A549 (cell line): ENCODE measurements at regions of chr17 and their contacts with region 1.

Region 1: DNA sequence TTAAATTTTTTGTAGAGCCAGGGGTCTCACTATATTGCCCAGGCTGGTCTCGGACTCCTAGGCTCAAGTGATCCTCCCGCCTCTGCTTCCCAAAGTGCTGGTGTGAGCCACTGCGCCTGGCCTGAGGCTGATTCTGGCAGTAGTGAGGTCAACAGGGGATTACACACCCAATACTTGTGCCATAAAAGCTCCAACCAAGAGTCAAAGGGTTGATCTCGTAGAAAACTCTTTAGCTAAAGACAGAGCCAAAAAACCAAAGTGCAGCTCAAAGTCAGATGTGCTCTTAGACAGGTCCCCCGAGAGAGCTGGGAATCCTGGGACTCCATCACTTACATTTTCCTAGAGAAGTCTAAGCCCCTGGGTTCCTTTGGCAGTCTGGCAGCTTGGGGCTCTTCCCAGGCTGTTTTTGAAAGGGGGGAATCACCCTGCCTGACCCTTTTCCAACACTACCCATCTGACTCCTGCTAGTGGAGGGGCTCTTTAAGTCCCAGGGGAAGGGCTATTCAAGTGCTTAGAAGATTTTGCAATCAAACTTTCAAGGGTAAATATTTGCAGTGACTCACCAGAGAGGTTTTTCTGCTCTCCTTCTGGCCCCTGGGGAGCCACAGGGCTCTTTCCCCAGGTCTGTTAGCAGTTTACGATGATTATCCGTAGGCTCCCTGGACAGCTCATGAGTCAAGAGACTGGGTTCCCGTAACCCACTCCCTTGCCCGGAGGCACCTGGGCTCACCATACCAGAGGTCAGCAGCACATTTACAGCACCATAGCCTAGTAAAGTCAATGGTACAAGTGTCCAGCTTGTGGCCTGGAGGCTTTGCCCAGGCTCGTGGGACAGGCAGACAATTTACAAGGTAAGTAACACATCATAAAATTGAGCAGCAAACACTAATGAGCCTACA is 408.7 kb downstream of the SLC39A11 start:
- DNase-seq: peak; percentile 98 to 100
- ATAC-seq: peak; percentile 91 to 94
- H3K4me3 ChIP-seq: peak overlapping the region; percentile 6; the same call in 1 of the 3 replicates
- H3K27ac ChIP-seq: peak overlapping the region; percentile 89 to 94
- H3K4me1 ChIP-seq: peaks cover 48% of the 10 kb centered on the region
- CTCF ChIP-seq: no peak
- EP300 ChIP-seq: peak; percentile 96 to 97
- POLR2A ChIP-seq: no peak
- RAD21 ChIP-seq: peak; percentile 57 to 80

Region 2: DNA sequence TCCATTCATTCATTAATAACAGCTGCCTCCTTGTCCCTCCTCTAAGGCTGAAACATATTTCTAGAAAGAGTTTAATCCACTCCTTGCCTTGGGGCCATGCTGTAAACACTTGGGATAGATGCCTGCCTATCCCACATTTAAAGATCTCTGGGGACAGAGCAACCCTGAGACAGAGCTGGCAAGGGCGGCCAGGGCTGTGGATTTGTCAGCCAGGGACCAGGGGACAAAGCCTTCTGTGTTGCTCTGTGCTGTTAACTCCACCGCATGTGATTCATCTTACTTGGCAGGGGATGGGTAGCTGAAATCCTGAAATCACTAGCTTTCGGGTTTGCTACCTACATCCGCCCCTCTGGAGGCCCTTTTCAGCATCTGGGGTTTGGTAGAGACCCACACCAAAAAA is 15.8 kb after region 1 on chr17:
- CTCF ChIA-PET with region 1: interaction called, 39 read pairs
- POLR2A ChIA-PET with region 1: interaction called, 3 read pairs
- DNase-seq: no peak
- ATAC-seq: no peak
- H3K4me3 ChIP-seq: no peak overlapping the region
- H3K27ac ChIP-seq: peak overlapping the region; percentile 55 to 85
- H3K4me1 ChIP-seq: peaks cover 53% of the 10 kb centered on the region
- CTCF ChIP-seq: no peak
- EP300 ChIP-seq: no peak
- POLR2A ChIP-seq: no peak
- RAD21 ChIP-seq: no peak

Region 3: GRCh38 chr17:72715906-72716572 is 32.3 kb after region 1 on chr17:
- CTCF ChIA-PET with region 1: interaction called, 12 read pairs
- POLR2A ChIA-PET with region 1: interaction called, 5 read pairs
- DNase-seq: peak; percentile 93 to 97
- ATAC-seq: peak; percentile 86 to 89
- H3K4me3 ChIP-seq: no peak overlapping the region
- H3K27ac ChIP-seq: peak overlapping the region; percentile 84 to 85
- H3K4me1 ChIP-seq: peaks cover 41% of the 10 kb centered on the region
- CTCF ChIP-seq: no peak
- EP300 ChIP-seq: peak; percentile 97 to 98
- POLR2A ChIP-seq: no peak
- RAD21 ChIP-seq: peak; percentile 52 to 70; a peak in 4 of 5 replicates

Region 4: GRCh38 chr17:72850410-72851118 is 166.8 kb after region 1 on chr17:
- CTCF ChIA-PET with region 1: no interaction called
- POLR2A ChIA-PET with region 1: no interaction called
- DNase-seq: peak in 1 of 2 experiments; percentile 18
- ATAC-seq: peak; percentile 37 to 68; a peak in 1 of 6 replicates
- H3K4me3 ChIP-seq: no peak overlapping the region
- H3K27ac ChIP-seq: no peak overlapping the region
- H3K4me1 ChIP-seq: 0 out of 3 replicates have a peak, but pooled peaks cover 5% of the 10 kb centered on the region
- CTCF ChIP-seq: no peak
- EP300 ChIP-seq: no peak
- POLR2A ChIP-seq: no peak
- RAD21 ChIP-seq: no peak